ENCODE measurements at regions of chr3 and their contacts with region 1.

Region 1: GRCh38 chr3:114432310-114432709 is 138.5 kb downstream of the TIGIT start:
- DNase-seq: no peak
- H3K4me3 ChIP-seq: no peak overlapping the region
- H3K27ac ChIP-seq: no peak overlapping the region
- H3K4me1 ChIP-seq: peaks cover 0 to 4% (median 1%) of the 10 kb centered on the region in 4 experiments
- H3K27me3 ChIP-seq: no peaks in the 10 kb centered on the region

Region 2: DNA sequence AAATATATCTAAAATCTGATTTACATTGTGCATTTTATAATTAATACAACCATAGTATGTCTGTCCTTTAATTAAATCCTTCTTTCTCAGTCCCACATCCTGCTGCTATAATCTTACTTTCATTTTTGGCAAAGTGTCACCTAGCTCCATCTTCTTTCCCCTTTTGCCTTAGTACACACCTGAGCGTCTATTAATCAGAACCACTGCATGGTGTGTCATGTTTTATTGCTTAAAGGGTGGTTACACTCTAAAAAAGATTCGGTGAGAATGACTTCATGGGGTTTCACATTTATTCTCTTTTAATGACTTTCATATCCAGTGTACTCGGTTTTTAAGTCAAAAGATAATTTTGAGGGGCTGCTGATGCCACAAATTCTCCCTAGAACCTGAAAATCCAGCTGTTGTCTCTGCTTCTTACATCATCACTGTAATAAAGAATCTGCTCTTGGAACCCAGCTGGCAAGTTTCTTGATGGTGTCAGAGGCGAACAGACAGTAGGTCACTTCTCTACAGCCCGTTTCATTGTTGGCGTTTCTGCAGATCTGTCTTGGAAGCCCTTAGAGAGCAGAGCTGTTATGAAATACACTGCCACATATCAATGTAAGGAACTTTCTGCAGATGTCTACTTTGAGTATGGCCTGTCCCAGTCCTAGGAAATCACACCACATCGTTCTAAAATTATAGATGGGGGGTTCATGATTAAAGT is 38.8 kb before region 1 on chr3:
- CTCF ChIA-PET with region 1: no interaction called
- POLR2A ChIA-PET with region 1: no interaction called
- DNase-seq: peak in 1 of 3 donors; percentile 2
- H3K4me3 ChIP-seq: no peak overlapping the region
- H3K27ac ChIP-seq: no peak overlapping the region
- H3K4me1 ChIP-seq: no peaks in the 10 kb centered on the region
- H3K27me3 ChIP-seq: no peaks in the 10 kb centered on the region

Region 3: DNA sequence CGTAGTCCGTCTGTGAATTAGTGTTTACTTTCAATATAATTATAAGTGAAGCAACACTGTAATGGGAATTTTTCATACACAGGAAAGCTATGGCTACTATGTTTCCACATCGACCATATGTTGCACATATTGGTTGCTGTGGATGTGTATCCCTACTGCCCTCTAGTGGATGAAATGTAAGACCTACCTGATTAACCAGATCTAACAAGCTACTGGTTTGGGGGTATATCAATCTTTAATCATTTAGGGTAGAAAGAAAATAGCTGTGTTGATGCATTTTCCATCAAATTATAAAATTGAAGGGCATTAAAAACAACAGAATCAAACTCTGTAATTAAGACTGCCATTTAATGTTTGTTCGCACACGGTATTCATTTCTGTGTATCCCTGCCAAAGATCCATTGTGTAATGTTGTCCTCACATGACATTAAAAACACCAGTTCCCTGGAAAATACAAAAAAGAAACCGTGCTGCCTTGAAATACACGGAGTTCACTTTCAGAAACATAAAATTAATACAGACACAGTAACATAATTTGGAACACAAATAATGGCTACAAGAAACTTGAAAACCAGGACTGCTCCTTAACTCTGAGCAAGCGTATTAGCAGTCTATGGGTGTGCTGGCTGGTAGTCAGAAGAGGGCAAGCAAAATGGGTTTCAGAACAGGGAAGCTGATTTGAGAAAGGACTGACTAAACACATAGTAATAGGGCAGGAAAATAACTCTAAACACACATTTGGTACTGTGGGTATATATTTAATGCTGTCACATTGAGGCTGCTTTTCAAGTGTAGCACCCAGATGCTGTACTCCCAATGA is 13.4 kb before region 1 on chr3:
- CTCF ChIA-PET with region 1: interaction called, 38 read pairs
- POLR2A ChIA-PET with region 1: interaction called, 3 read pairs
- DNase-seq: peak; percentile 66 to 79 (median 79)
- H3K4me3 ChIP-seq: no peak overlapping the region
- H3K27ac ChIP-seq: no peak overlapping the region
- H3K4me1 ChIP-seq: peaks cover 0 to 2% (median 0%) of the 10 kb centered on the region in 4 experiments
- H3K27me3 ChIP-seq: peaks cover 0 to 2% (median 0%) of the 10 kb centered on the region in 5 experiments